IMR-90 (cell line): ENCODE measurements at regions of chrX and their contacts with region 1.

Region 1: DNA sequence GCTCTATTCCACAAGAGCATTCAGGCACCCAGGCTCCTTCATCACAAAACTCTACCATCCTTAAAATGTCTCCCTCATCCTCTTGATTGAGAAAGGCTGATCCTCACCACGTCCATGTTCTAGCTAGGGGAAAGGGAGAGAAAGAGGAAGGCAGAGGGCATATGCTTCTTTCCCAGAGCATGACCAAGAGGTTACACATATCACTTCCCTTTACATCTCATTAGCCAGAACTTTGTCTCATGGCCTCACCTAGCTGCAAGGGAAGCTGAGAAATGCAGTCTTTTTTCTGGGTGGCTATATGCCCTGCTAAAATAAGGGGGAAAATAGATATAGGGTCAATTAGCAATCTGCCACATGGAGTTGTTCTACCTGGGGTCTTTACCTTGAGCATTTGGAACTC is 42.7 kb downstream of the LONRF3 start:
- DNase-seq: no peak
- ATAC-seq: no peak
- H3K4me3 ChIP-seq: no peak overlapping the region
- H3K27ac ChIP-seq: no peak overlapping the region
- H3K4me1 ChIP-seq: no peaks in the 10 kb centered on the region
- H3K27me3 ChIP-seq: peaks cover 3% of the 10 kb centered on the region
- CTCF ChIP-seq: no peak
- POLR2A ChIP-seq: no peak
- RAD21 ChIP-seq: no peak

Region 2: GRCh38 chrX:118862091-118862490 is 155.0 kb before region 1 on chrX:
- CTCF ChIA-PET with region 1: no interaction called
- POLR2A ChIA-PET with region 1: no interaction called
- dilution Hi-C with region 1: no loop called
- in situ Hi-C with region 1: no loop called
- intact Hi-C with region 1: no loop called
- DNase-seq: no peak
- ATAC-seq: no peak
- H3K4me3 ChIP-seq: no peak overlapping the region
- H3K27ac ChIP-seq: no peak overlapping the region
- H3K4me1 ChIP-seq: no peaks in the 10 kb centered on the region
- H3K27me3 ChIP-seq: peaks cover 2% of the 10 kb centered on the region
- CTCF ChIP-seq: no peak
- POLR2A ChIP-seq: no peak
- RAD21 ChIP-seq: no peak

Region 3: DNA sequence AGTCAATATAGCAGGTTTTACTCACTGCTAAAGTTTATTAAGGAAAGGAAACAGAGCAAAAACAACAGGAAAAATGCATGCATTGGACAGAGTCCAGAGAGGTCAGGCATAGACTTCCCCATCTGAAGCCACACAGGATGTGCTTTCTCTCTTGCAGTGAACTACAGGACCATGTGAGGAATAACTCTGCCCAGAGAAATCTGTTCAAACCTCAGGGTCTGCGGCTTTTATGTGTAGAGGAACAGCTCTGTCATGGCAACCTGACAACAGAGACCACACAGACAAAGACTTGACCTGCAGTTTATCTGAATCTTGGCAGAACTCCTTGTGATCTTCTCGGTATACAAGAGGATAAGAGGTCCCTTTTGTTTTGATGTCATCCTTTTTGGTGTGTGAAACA is 88.9 kb before region 1 on chrX:
- CTCF ChIA-PET with region 1: no interaction called
- POLR2A ChIA-PET with region 1: no interaction called
- dilution Hi-C with region 1: no loop called
- in situ Hi-C with region 1: no loop called
- intact Hi-C with region 1: no loop called
- DNase-seq: no peak
- ATAC-seq: no peak
- H3K4me3 ChIP-seq: no peak overlapping the region
- H3K27ac ChIP-seq: no peak overlapping the region
- H3K4me1 ChIP-seq: no peaks in the 10 kb centered on the region
- H3K27me3 ChIP-seq: no peaks in the 10 kb centered on the region
- CTCF ChIP-seq: no peak
- POLR2A ChIP-seq: no peak
- RAD21 ChIP-seq: no peak

Region 4: DNA sequence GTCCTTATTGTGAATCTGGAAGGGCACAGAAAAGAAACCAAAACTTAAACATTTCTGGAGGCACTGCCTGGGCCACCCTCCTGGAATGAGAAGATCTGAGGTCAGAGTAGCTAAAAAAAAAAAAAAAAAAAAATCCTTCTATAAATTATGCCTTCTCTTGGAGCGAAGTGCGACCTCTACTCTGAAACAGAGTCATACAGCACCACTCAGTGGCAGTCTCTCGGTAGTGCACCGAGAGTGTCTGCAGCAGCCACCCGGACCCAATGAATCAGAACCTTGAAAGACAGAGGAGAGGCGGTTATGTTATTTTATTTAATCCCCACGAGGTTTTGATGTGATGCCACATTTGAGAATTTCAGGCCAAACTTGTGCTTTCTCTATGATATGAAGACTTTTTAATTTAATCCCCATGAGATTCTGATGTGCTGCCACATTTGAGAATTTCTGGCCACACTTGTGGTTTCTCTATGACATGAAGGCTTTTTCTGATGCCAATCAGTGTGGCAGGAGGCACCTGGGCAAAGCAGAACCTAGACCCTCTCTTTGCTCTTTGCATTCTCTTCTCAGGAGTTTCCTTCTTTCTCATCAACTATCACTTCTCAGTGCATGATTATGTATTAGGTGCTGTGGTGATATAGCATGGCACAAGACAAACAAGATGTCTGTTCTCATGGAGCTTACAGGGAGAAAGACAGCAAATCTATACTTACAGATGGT is 50.1 kb after region 1 on chrX:
- CTCF ChIA-PET with region 1: no interaction called
- POLR2A ChIA-PET with region 1: no interaction called
- dilution Hi-C with region 1: no loop called
- in situ Hi-C with region 1: no loop called
- intact Hi-C with region 1: loop called (anchors 1 kb)
- DNase-seq: peak; percentile 49
- ATAC-seq: peak; percentile 96
- H3K4me3 ChIP-seq: no peak overlapping the region
- H3K27ac ChIP-seq: no peak overlapping the region
- H3K4me1 ChIP-seq: no peaks in the 10 kb centered on the region
- H3K27me3 ChIP-seq: peaks cover 8% of the 10 kb centered on the region
- CTCF ChIP-seq: peak; percentile 70
- POLR2A ChIP-seq: no peak
- RAD21 ChIP-seq: peak; percentile 76